ENCODE measurements at regions of chr19 and their contacts with region 1.

Region 1: DNA sequence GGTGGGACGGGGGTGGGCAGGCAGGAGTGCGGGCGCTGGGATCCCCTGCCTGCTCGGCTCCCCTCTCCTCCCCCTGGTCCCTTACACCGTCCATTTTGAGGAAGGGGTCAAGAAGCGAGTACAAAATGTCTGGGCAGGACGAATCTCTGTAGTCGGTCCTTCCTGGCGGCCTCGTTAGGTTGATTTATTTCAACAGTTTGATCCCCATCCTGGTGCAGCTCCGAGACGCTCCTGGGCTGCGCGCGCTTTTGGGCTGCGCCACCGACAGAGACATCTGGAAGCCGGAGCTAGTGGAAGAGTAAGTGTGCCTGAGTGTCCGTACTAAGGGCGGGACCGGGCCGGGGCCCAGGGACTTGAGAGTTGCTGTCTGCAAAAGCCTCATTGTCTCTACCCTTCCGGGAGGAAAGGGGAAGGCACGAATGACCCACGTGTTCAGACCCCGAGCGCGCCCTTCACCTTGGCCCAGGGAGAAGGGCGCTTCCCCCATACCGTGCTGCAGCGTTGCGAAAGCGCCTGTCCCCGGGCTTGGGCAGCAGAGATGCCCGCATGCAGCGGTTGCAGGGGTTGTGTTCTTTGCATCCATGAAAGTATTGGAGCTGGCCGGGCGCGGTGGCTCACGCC is 1.8 kb downstream of the ZNF114 start:
- DNase-seq: peak in 3 of 9 experiments; percentile 10 to 55 (median 30)
- ATAC-seq: peak; percentile 23
- H3K4me3 ChIP-seq: peak overlapping the region; percentile 41 to 43
- H3K4me3 Mint-ChIP-seq: peak overlapping the region; percentile 82
- H3K27ac ChIP-seq: no peak overlapping the region
- H3K27ac Mint-ChIP-seq: no peak overlapping the region
- H3K4me1 ChIP-seq: peaks cover 4% of the 10 kb centered on the region
- H3K4me1 Mint-ChIP-seq: peaks cover 13% of the 10 kb centered on the region
- H3K27me3 ChIP-seq: peaks cover 0 to 14% of the 10 kb centered on the region in 2 experiments
- H3K27me3 Mint-ChIP-seq: peaks cover 12% of the 10 kb centered on the region
- CTCF ChIP-seq: no peak

Region 2: DNA sequence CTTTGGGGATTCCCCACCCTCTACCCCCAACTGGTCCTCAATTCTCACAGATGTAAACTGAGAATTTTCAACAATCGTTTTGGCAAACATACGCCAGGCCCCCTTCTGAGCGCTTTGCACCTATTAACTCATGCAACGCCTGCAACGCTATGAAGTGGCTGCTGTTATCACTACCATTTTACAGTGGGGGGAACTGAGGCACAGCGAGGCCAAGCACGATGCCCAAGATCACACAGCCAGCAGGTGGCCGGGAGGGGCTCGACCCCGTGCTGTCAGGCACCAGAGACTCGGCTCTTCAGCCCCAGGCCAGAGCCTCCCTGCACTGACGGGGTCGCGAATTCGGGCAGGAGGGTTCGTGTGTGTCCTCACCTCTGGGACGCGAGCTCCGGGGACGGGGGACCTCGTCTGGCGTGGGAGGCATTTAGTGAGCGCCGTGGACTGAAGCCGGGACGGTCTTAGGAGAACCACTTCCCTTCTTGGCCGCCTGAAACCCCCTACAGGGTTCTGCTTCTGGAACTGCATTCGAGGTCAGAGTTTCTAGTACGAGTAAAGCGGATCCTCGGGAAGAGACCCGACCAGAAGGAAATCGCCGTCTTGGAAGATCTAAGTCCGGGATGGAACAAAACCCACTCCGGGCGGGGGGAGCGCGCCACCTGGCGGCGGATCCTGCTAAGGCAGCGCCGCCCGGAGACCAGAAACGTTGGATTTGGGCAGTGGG is 19.3 kb after region 1 on chr19:
- CTCF ChIA-PET with region 1: interaction called, 73 read pairs
- POLR2A ChIA-PET with region 1: interaction called, 3 read pairs
- intact Hi-C with region 1: loop called in 1 of 2 experiments (anchors 1 kb)
- DNase-seq: peak; percentile 30 to 83 (median 66)
- ATAC-seq: peak; percentile 52
- H3K4me3 ChIP-seq: peak overlapping the region; percentile 42 to 82
- H3K4me3 Mint-ChIP-seq: peak overlapping the region; percentile 78
- H3K27ac ChIP-seq: no peak overlapping the region
- H3K27ac Mint-ChIP-seq: no peak overlapping the region
- H3K4me1 ChIP-seq: peaks cover 5% of the 10 kb centered on the region
- H3K4me1 Mint-ChIP-seq: peaks cover 8% of the 10 kb centered on the region
- H3K27me3 ChIP-seq: no peaks in the 10 kb centered on the region
- H3K27me3 Mint-ChIP-seq: peaks cover 9% of the 10 kb centered on the region
- CTCF ChIP-seq: peak; percentile 94

Region 3: GRCh38 chr19:48363810-48364563 is 92.3 kb after region 1 on chr19 and contains the starts of genes SYNGR4 and TMEM143:
- CTCF ChIA-PET with region 1: no interaction called
- POLR2A ChIA-PET with region 1: no interaction called
- intact Hi-C with region 1: no loop called
- DNase-seq: peak; percentile 96 to 100 (median 98)
- ATAC-seq: peak; percentile 88
- H3K4me3 ChIP-seq: peak within 1 kb of the TSS; percentile 82 to 90
- H3K4me3 Mint-ChIP-seq: peak within 1 kb of the TSS; percentile 83
- H3K27ac ChIP-seq: peak within 1 kb of the TSS; percentile 64 to 89
- H3K27ac Mint-ChIP-seq: peak within 1 kb of the TSS; percentile 86
- H3K4me1 ChIP-seq: peaks cover 17% of the 10 kb centered on the region
- H3K4me1 Mint-ChIP-seq: peaks cover 19% of the 10 kb centered on the region
- H3K27me3 ChIP-seq: no peaks in the 10 kb centered on the region
- H3K27me3 Mint-ChIP-seq: no peaks in the 10 kb centered on the region
- CTCF ChIP-seq: no peak
- total RNA-seq, gene SYNGR4: not detected
- total RNA-seq, gene TMEM143: 6.4 to 7.7 TPM

Measured in CD8-positive, alpha-beta T cell (primary cell).